Activated CD4-positive, alpha-beta T cell treated with anti-CD3 and anti-CD28 coated beads, Interleukin-2, amount 10 ng/mL, durations not matched to agents 24 days and 14 days (primary cell): ENCODE measurements at regions of chr11 and their contacts with region 1.

Region 1: GRCh38 chr11:8099291-8099899 is 18.4 kb downstream of the TUB start:
- DNase-seq: peak; percentile 91
- H3K4me3 Mint-ChIP-seq: no peak overlapping the region
- H3K27ac Mint-ChIP-seq: no peak overlapping the region
- H3K4me1 Mint-ChIP-seq: no peaks in the 10 kb centered on the region
- H3K27me3 Mint-ChIP-seq: no peaks in the 10 kb centered on the region

Region 2: GRCh38 chr11:7892840-7893254 is 206.5 kb before region 1 on chr11:
- intact Hi-C with region 1: loop called (anchors 1 kb)
- DNase-seq: peak; percentile 67
- H3K4me3 Mint-ChIP-seq: no peak overlapping the region
- H3K27ac Mint-ChIP-seq: no peak overlapping the region
- H3K4me1 Mint-ChIP-seq: peaks cover 5% of the 10 kb centered on the region
- H3K27me3 Mint-ChIP-seq: peaks cover 15% of the 10 kb centered on the region

Region 3: DNA sequence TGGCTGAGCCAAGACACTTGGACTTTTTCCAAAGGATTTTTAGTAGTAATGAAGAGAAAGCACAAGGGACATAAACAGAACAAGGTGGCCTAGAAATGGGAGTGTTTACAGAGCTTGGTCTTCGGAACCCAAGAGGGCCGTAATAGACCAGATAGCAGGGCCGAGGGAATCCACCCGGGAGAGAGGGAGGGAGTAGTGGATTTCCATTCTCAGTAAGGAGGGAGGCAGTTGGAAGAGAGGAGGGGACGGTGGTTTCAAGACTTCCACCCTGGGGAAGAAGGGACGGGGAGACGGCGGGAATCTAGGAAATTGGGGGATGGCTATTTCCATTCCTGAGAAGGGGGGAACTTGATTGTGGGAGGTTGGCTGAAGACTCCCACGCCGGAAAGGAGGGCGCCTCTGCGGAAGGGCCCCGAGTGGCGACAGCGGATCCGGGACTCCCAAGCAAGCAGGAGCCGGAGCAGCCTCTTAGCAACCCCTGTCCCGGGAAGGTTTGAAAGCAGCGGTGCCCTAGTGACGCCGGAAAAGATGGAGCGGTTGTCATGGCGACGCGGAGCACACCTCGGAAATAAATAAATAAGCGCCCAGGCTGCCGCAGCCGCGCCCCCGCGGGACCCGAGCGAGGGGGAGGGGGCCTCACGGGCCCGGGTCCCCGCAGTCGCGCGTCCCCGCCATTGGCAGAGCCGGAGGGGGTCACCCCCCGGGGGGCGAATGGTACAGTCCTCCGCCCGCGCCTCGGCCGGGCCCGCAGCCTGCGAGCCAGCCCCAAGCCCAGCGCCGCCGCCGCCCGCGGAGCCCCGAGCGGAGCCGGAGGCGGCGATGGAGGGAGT is 80.7 kb before region 1 on chr11:
- intact Hi-C with region 1: no loop called
- DNase-seq: peak; percentile 90
- H3K4me3 Mint-ChIP-seq: peak overlapping the region; percentile 75
- H3K27ac Mint-ChIP-seq: peak overlapping the region; percentile 51
- H3K4me1 Mint-ChIP-seq: peaks cover 11% of the 10 kb centered on the region
- H3K27me3 Mint-ChIP-seq: peaks cover 55% of the 10 kb centered on the region

Region 4: DNA sequence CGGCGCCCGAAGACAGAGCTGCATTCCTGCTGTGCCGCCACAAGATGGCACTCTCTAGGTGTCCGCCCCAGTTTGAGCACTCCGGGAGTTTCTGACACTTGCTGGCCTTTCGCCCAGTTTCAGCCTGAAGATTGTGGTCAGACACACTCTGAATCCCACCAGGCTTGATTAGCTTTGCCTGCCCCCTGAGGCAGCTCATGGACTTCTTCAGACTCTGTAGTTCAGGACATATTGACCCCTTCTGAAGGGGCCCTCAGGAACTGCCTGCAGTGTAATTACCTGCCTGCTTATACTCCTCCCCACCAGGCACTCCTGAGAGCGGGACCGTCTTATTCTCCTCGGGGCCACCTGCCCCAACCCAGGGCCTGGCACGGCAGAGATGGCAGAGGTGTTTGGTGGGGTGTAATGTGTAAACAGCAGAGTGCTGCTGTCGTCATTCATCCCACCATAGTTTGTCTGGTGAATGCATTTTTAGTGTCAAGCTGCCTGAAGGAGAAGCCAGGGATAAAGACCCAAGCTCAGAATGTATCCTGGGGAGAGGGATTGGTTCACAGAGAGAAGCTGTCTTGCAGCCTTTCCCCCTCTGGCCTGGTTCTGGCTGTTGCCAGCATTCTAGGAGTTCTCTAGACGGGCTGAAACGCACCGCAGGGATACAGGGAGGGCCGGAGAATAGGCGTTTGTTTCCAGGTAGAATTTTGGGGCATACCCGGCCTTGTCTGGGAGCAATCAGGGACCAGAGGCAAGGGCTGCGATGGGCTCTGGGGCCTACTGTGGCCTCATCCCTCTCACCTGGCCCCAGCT is 65.9 kb before region 1 on chr11:
- intact Hi-C with region 1: loop called (anchors 1 kb)
- DNase-seq: peak; percentile 83
- H3K4me3 Mint-ChIP-seq: no peak overlapping the region
- H3K27ac Mint-ChIP-seq: no peak overlapping the region
- H3K4me1 Mint-ChIP-seq: peaks cover 4% of the 10 kb centered on the region
- H3K27me3 Mint-ChIP-seq: peaks cover 8% of the 10 kb centered on the region

Region 5: DNA sequence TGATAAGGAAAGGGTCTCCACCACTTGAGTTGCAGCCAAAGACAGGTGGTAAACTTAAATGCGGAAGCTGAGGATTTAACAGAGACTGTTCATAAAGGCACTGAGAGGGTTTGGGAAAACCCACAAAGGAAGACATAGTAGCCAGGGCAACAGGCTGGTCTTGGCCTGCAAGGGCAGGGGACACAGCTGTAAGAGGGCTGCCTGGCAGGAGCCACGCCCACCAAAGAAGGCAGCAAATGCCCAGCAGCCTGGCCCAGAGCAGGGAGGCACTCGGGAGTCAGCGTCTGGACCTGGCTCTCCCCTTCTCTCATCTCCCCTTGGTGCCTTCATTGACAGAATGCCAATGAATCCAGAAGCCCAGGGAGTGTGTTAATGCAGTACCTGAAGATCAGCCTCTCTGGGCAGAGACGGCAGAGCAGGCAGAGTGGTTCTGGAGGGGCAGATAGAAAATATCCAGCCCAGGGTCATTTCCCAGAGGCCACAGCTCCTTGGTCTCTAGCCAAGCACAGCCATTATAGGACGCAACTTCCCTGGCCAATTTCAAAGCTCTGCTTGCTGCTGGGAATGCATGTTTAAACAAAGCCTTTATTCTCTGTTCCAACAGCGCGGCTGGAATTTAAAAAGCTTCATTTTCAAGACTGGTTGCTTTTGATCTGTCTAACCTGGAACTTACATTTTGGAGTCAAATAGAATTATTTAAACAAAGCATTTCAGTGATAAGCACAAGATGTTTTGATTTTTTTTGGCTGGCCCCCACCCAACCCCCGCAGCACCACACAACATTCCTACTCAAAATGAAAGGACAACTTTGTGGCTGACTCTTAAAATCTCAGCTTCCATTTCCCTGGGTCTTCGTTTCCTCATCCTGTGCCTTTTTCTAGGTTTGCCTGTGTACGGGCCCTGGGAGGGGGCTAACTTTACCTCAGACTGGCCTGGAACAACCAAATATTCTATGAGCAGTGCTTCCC is 289.9 kb after region 1 on chr11:
- intact Hi-C with region 1: no loop called
- DNase-seq: peak; percentile 35
- H3K4me3 Mint-ChIP-seq: no peak overlapping the region
- H3K27ac Mint-ChIP-seq: no peak overlapping the region
- H3K4me1 Mint-ChIP-seq: no peaks in the 10 kb centered on the region
- H3K27me3 Mint-ChIP-seq: no peaks in the 10 kb centered on the region